Sciatic nerve (tissue), 2 donors: ENCODE measurements at regions of chr14 and their contacts with region 1.

Region 1: DNA sequence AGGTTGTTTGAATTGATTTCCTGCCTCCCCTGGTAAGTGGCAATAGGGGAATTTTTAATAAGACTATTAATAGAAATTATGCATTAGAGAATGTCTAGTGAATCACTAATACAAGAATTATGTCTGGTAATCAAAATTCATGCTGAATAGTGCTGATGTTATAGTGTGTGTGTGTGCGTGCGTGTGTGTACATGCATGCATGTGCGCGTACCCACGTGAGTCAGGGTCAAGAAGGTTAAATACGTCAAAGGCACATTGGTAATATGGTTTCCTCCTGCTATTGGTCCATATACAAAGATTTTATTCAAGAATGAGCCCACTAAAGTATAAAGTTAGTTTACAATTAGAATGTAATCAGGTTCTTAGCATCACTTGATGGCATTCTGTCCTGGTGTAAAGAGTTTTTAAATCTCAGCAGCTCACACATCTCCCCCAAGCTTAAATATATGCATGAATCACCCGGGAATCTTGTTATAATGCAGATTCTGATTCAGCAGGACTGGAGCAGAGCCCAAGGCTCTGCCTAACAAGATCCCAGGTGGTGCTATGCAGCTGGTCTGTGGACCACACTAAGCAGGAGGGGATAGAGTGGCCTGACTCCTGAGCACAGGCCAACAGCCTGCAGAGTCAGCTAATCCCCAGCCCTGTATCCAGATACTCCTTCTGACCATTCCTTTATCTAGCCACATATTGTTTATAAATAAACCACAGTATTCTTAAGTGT is 43.9 kb downstream of the TTC9 start:
- DNase-seq: no peak
- ATAC-seq: no peak

Region 2: DNA sequence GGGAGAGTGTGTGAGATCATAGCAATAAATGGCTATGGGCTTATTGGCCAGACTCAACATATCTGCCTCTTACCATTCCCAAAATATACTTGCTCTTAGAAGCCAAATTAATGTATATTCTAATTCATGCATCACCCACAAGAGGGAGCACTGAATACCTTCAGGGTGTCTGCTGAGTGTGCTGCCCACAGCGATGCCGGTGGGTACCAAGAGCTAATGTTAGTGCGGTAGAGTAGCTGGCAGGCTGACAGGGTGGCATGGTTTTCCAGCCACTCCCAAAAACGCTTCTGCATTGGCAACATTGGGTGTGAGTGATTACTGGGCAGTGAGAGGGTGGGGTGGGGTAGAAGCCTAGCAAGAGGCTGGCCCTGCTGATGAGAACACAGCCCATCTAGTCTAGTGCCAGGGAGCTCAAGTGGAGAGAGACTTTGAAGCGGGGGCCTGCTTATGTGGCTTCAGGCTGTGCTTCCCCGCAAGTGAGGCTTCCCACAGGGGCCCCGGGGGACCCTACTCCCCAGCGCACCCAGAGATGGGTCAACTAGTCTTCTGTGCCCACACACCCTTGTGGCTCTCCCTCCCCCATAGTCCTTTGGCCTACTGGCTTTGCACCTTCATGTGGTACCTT is 1210.3 kb before region 1 on chr14:
- intact Hi-C with region 1: loop called (anchors 5 kb)
- DNase-seq: no peak
- ATAC-seq: no peak

Region 3: GRCh38 chr14:69838881-69839416 is 846.7 kb before region 1 on chr14:
- intact Hi-C with region 1: no loop called
- DNase-seq: no peak
- ATAC-seq: no peak